ENCODE measurements at regions of chr2 and their contacts with region 1.

Region 1: GRCh38 chr2:223970343-223971128 is 13.3 kb downstream of the MRPL44 start:
- DNase-seq: no peak

Region 2: GRCh38 chr2:224278531-224278930 is 308.0 kb after region 1 on chr2:
- intact Hi-C with region 1: loop called in 1 of 2 experiments (anchors 10 kb)
- DNase-seq: no peak

Region 3: DNA sequence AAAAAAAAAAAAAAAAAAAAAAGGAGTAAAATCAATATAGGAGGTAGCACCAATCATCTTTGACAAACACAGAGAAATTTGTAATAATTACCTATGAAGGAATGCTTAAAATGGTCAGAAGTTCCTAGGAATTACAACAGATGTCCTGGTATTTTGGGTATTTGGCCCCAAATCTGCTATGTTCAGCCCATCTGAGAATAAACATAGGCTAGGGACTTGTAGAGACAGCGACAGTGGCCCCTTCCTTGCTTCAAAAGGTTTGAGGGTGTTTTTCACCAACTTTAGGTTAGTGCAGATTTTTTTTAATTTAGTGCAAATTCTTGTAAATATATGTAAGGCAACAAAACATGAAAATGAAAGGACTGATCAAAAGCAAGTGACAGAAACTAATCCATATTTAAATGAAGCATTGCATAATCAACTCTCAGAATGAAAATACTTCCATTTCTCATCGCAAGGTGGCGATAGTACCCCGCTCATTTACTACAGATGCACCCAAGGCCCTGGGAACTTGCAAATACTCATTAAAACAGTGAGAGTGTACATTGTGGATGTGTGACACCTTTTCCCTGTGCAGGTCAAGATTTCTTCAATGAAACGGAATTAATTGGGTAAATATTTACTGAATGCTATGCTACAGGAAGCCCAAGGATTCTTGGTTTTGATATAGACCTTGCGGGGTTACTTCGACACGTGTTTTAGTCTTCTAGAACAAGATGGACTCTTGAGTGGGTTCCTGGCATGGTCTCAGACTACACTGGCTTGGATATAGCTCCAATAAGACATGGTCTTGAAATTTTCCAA is 386.8 kb after region 1 on chr2:
- intact Hi-C with region 1: no loop called
- DNase-seq: no peak